ENCODE measurements at regions of chr12 and their contacts with region 1.

Region 1: DNA sequence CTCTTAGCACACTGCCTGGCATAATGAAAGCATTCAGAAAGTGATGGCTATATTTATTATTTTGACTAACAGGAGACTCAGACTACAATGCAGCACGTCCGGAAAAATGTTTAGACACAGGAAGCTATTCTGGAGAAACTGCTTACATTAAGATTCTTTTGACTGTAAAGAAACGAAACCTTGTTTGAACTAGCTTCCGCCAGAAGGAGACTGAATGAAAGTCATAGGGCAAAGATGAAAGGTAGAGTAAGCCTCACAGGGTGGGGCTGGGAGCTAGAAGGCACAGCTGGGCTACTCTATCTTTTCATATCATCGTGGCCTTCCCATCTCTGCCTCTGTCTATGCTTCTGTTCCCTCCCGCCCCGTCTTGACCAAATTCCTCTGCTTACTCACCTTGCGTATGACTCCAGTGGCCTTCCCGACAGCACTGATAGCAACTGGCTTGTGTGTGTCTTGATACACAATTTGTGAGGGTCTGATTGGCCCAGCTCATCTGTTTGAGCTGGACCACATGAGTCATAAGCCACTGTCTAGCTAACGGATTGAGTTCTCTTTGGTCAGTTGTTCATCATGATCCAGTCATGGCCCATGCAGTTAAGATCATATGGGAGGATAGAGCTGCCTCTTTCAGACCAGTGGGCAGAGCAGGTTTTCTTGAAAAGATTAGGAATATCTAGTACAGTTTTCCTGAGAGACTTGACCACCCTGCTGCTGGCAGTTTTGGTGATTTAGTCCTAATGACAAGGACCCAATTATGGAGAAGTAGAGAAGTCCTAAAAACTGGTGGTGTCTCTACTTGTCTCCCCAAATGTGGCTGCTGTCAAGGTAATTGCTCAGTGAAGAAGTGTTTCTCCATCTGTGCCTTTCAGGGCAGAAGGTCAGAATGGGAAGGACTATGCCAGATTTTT is 151.5 kb upstream of the SLC38A2 start:
- DNase-seq: peak; percentile 60
- H3K4me3 Mint-ChIP-seq: peak overlapping the region; percentile 72
- H3K27ac Mint-ChIP-seq: peak overlapping the region; percentile 93
- H3K4me1 Mint-ChIP-seq: peaks cover 55% of the 10 kb centered on the region
- H3K27me3 Mint-ChIP-seq: no peaks in the 10 kb centered on the region

Region 2: DNA sequence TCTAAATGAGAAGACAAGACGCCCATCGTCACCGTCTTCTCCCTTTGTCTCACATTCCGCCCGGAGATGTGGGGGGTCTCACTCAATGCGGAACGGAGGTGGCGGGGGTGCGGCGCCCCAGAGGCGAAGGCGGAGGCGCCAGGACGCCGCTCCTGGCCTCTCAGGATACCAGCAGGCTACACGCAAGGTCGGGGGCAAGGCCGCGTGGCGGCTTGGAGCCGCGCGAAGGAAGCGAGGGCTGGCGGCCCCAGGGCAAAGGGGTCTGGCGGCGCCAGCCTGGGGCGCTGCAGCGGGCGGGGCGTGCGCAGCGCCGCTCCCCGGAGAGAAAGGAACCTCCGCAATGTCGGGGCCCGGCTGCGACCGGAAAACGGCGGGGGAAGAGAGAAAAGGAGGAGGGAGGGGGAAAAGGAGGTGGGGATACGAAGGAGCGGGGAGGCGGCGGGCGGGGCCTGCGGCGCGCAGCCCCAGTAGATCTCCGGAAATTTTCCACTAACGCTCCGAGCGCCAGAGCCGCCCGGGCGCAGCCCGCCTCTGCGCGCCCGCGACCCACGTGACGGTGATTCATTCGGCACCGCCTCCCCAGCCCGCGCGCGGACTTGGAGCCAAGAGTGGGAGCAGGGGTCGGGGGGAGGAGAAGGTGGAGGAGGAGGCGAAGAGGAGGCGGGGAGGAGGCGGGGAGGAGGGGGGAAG is 141.0 kb before region 1 on chr12:
- CTCF ChIA-PET with region 1: interaction called, 5 read pairs
- POLR2A ChIA-PET with region 1: interaction called, 19 read pairs
- DNase-seq: peak; percentile 95
- H3K4me3 Mint-ChIP-seq: peak overlapping the region; percentile 82
- H3K27ac Mint-ChIP-seq: peak overlapping the region; percentile 90
- H3K4me1 Mint-ChIP-seq: peaks cover 38% of the 10 kb centered on the region
- H3K27me3 Mint-ChIP-seq: no peaks in the 10 kb centered on the region

Region 3: GRCh38 chr12:46459861-46460545 is 64.1 kb before region 1 on chr12:
- CTCF ChIA-PET with region 1: interaction called, 9 read pairs
- POLR2A ChIA-PET with region 1: interaction called, 26 read pairs
- DNase-seq: peak; percentile 23
- H3K4me3 Mint-ChIP-seq: peak overlapping the region; percentile 60
- H3K27ac Mint-ChIP-seq: peak overlapping the region; percentile 94
- H3K4me1 Mint-ChIP-seq: peaks cover 64% of the 10 kb centered on the region
- H3K27me3 Mint-ChIP-seq: no peaks in the 10 kb centered on the region

Region 4: GRCh38 chr12:46546634-46547286 is 22.6 kb after region 1 on chr12:
- CTCF ChIA-PET with region 1: interaction called, 3 read pairs
- POLR2A ChIA-PET with region 1: interaction called, 46 read pairs
- DNase-seq: peak; percentile 29
- H3K4me3 Mint-ChIP-seq: no peak overlapping the region
- H3K27ac Mint-ChIP-seq: peak overlapping the region; percentile 81
- H3K4me1 Mint-ChIP-seq: peaks cover 59% of the 10 kb centered on the region
- H3K27me3 Mint-ChIP-seq: no peaks in the 10 kb centered on the region

Measured in activated CD4-positive, alpha-beta memory T cell treated with anti-CD3 and anti-CD28 coated beads, Interleukin-2, amount 10 ng/mL, durations not matched to agents 7 days and 5 days (primary cell).